AG04450 (cell line): ENCODE measurements at regions of chr17 and their contacts with region 1.

Region 1: GRCh38 chr17:32444308-32445073 is at the start of gene PSMD11:
- DNase-seq: peak; percentile 88
- H3K4me3 ChIP-seq: peak within 1 kb of the TSS; percentile 92
- H3K27ac ChIP-seq: peak within 1 kb of the TSS; percentile 89
- H3K27me3 ChIP-seq: peaks cover 7% of the 10 kb centered on the region
- CTCF ChIP-seq: peak; percentile 86
- polyA plus RNA-seq, gene PSMD11: 85.0 and 99.0 TPM in 2 replicates

Region 2: DNA sequence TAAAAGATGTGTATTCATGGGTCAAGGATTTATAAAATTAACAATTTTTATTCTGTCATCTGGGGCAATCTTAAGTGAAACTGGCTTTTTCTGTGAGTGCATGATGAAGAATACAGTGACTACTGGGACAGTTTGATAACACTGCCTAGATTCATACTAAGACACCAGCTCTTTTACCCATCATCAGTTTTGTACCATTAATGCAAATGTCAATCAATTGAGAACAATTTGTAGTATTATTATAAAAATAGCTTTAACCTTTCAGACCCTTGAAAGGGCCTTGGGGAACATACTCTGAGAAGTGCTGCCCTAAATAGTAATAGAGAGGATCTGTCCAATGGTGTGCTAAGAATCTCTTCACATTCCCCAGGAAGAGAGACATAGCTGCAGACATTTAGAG is 45.5 kb before region 1 on chr17:
- CTCF ChIA-PET with region 1: interaction called, 13 read pairs
- POLR2A ChIA-PET with region 1: interaction called, 3 read pairs
- DNase-seq: no peak
- H3K4me3 ChIP-seq: no peak overlapping the region
- H3K27ac ChIP-seq: no peak overlapping the region
- H3K27me3 ChIP-seq: no peaks in the 10 kb centered on the region
- CTCF ChIP-seq: no peak

Region 3: GRCh38 chr17:32429598-32429997 is 14.9 kb before region 1 on chr17:
- CTCF ChIA-PET with region 1: interaction called, 69 read pairs
- POLR2A ChIA-PET with region 1: interaction called, 3 read pairs
- DNase-seq: no peak
- H3K4me3 ChIP-seq: no peak overlapping the region
- H3K27ac ChIP-seq: no peak overlapping the region
- H3K27me3 ChIP-seq: peaks cover 2% of the 10 kb centered on the region
- CTCF ChIP-seq: no peak

Region 4: GRCh38 chr17:32483451-32484019 is 39.0 kb after region 1 on chr17:
- CTCF ChIA-PET with region 1: interaction called, 4 read pairs
- POLR2A ChIA-PET with region 1: interaction called, 10 read pairs
- DNase-seq: no peak
- H3K4me3 ChIP-seq: no peak overlapping the region
- H3K27ac ChIP-seq: peak overlapping the region; percentile 61
- H3K27me3 ChIP-seq: no peaks in the 10 kb centered on the region
- CTCF ChIP-seq: peak; percentile 60